Transverse colon (tissue), 4 donors: ENCODE measurements at regions of chr11 and their contacts with region 1.

Region 1: GRCh38 chr11:62324738-62325556 is 12.3 kb upstream of the ASRGL1 start:
- DNase-seq: peak; percentile 20
- H3K4me3 ChIP-seq: no peak overlapping the region
- H3K27ac ChIP-seq: no peak overlapping the region
- H3K4me1 ChIP-seq: peaks cover 0 to 14% (median 7%) of the 10 kb centered on the region in 4 donors
- H3K27me3 ChIP-seq: peaks cover 4% of the 10 kb centered on the region
- CTCF ChIP-seq: peak in 4 of 5 experiments; percentile 23 to 43 (median 36)
- EP300 ChIP-seq: no peak
- POLR2A ChIP-seq: no peak

Region 2: GRCh38 chr11:61871158-61871597 is 453.8 kb before region 1 on chr11:
- in situ Hi-C with region 1: loop called in 2 of 4 experiments (anchors 25 kb)
- intact Hi-C with region 1: no loop called
- DNase-seq: peak; percentile 65
- H3K4me3 ChIP-seq: peak overlapping the region in 1 of 4 donors; percentile 22
- H3K27ac ChIP-seq: no peak overlapping the region
- H3K4me1 ChIP-seq: peaks cover 0 to 8% (median 0%) of the 10 kb centered on the region in 4 donors
- H3K27me3 ChIP-seq: peaks cover 13% of the 10 kb centered on the region
- CTCF ChIP-seq: peak; percentile 71 to 84 (median 79)
- EP300 ChIP-seq: no peak
- POLR2A ChIP-seq: no peak

Region 3: GRCh38 chr11:62217191-62217748 is 107.7 kb before region 1 on chr11:
- in situ Hi-C with region 1: loop called in 1 of 4 experiments (anchors 25 kb)
- intact Hi-C with region 1: no loop called
- DNase-seq: no peak
- H3K4me3 ChIP-seq: no peak overlapping the region
- H3K27ac ChIP-seq: no peak overlapping the region
- H3K4me1 ChIP-seq: no peaks in the 10 kb centered on the region
- H3K27me3 ChIP-seq: no peaks in the 10 kb centered on the region
- CTCF ChIP-seq: peak in 4 of 5 experiments; percentile 28 to 49 (median 44)
- EP300 ChIP-seq: no peak
- POLR2A ChIP-seq: no peak

Region 4: DNA sequence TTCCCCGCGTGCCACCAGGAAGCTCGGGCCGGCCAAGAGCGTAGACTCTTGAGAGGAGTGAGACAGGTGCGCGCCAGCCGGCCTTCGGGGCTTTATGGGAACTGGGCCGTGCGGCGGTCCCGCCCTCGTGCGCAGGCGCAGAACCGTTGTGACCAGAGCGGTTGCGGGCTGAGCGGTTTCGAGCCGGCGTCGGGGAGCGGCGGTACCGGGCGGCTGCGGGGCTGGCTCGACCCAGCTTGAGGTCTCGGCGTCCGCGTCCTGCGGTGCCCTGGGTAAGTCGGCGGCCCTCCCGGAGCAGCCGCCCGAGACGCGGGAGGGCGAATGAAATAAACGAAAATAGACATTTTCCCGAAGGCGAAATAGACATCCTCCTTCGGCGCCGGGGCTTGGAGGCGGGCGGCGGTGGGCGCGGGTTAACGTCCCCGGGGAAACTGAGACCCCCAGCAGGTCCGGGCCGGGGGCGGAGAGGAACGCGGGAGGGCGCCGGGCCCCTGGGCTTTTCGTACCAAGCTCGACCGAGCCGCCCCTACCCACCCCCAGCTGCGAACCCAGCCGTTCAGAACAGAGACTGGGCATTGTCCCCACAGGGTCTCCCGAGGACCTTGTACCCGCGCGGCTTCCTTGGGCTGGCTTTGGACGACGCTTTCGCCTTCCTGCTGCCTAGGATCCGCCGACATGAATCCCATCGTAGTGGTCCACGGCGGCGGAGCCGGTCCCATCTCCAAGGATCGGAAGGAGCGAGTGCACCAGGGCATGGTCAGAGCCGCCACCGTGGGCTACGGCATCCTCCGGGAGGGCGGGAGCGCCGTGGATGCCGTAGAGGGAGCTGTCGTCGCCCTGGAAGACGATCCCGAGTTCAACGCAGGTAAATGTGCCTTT is 12.6 kb after region 1 on chr11 and contains the start of gene ASRGL1:
- in situ Hi-C with region 1: no loop called
- intact Hi-C with region 1: no loop called
- DNase-seq: peak; percentile 92
- H3K4me3 ChIP-seq: peak within 1 kb of the TSS; percentile 62 to 74 (median 66)
- H3K27ac ChIP-seq: peak within 1 kb of the TSS; percentile 49 to 77 (median 63)
- H3K4me1 ChIP-seq: peaks cover 5 to 18% (median 7%) of the 10 kb centered on the region in 4 donors
- H3K27me3 ChIP-seq: no peaks in the 10 kb centered on the region
- CTCF ChIP-seq: no peak
- EP300 ChIP-seq: no peak
- POLR2A ChIP-seq: peak; percentile 46
- total RNA-seq, gene ASRGL1: 14.9 to 44.5 (median 35.6) TPM